CD4-positive, alpha-beta memory T cell (primary cell): ENCODE measurements at regions of chr3 and their contacts with region 1.

Region 1: DNA sequence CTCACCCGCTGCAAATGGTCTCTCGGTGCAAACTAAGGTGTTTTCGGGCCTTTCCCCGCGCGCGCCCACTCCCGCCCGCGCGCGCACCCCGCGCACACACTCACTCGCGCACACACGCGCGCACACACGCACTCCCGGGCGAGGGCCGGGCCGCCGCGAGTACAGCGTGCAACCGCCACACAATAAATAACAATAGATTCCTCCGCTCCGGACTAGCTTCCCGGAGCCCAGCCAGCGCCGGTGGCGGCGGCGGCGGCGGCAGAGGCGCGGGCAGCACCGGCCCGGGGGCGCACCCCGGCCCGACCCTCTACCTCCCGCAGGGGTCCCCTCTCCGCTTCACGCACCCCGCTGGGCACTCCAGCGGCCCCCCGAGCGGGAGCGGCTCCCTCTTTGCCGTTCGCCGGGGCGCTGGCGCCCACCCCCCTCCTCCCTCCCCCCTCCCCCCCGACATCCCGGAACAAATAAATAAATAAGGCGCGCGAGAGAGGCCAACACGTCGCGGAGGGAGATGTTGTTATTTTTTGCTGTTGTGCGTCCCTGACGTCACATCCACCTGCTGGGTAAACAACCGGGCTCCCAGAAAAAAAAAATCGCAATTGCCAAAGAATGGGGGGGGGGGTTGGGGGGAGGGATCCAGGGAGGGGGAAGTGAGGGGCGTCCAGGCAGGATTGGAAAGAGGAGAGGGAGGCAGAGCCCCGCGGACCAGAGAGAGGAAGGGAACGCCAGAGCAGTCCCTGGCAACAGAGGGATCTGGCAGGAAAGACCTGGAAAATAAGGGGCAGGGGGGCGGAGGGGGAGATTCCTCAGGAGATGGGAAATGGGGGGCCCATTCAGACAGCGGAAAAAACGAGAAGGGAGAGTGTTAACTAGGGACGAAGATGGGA is at the start of gene FOXP1:
- DNase-seq: peak; percentile 69 to 80 (median 75)
- H3K4me3 ChIP-seq: peak within 1 kb of the TSS; percentile 47 to 65
- H3K4me3 Mint-ChIP-seq: peak within 1 kb of the TSS; percentile 91 to 96 (median 94)
- H3K27ac ChIP-seq: peak within 1 kb of the TSS; percentile 64
- H3K27ac Mint-ChIP-seq: peak within 1 kb of the TSS; percentile 94 to 98 (median 97)
- H3K4me1 ChIP-seq: peaks cover 27% of the 10 kb centered on the region
- H3K4me1 Mint-ChIP-seq: peaks cover 14 to 53% (median 20%) of the 10 kb centered on the region in 4 donors
- H3K27me3 ChIP-seq: no peaks in the 10 kb centered on the region
- H3K27me3 Mint-ChIP-seq: no peaks in the 10 kb centered on the region
- total RNA-seq, gene FOXP1: 290 to 348 TPM

Region 2: DNA sequence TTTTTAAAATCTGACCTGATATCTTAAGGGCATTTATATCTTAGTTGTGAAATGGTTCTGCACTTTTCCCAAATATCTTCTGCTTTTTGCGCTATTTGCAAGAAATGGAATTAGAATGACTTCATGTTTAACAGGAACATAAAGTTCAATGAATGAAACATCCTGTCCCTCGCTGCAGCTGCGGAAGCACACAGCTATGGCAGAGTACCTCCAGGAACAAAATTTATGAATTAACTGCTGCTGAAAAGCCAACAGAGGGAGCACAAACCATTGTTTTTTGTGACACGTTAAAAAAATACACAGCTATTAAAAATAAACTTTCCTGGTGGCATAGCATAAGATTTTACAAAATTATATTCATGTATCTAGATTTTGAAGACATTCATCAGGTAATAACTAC is 867.0 kb before region 1 on chr3:
- CTCF ChIA-PET with region 1: no interaction called
- POLR2A ChIA-PET with region 1: no interaction called
- intact Hi-C with region 1: loop called (anchors 1 kb)
- DNase-seq: peak in 4 of 5 donors; percentile 3 to 7 (median 4)
- H3K4me3 ChIP-seq: no peak overlapping the region
- H3K4me3 Mint-ChIP-seq: no peak overlapping the region
- H3K27ac ChIP-seq: no peak overlapping the region
- H3K27ac Mint-ChIP-seq: no peak overlapping the region
- H3K4me1 ChIP-seq: no peaks in the 10 kb centered on the region
- H3K4me1 Mint-ChIP-seq: peaks cover 0 to 3% (median under 1%) of the 10 kb centered on the region in 4 donors
- H3K27me3 ChIP-seq: peaks cover 4% of the 10 kb centered on the region
- H3K27me3 Mint-ChIP-seq: peaks cover 3 to 14% of the 10 kb centered on the region in 2 donors

Region 3: GRCh38 chr3:71130471-71131374 is 453.1 kb before region 1 on chr3:
- CTCF ChIA-PET with region 1: interaction called, 3 read pairs
- POLR2A ChIA-PET with region 1: no interaction called
- intact Hi-C with region 1: loop called (anchors 10 kb)
- DNase-seq: peak; percentile 79 to 90 (median 85)
- H3K4me3 ChIP-seq: peak overlapping the region; percentile 59 to 90
- H3K4me3 Mint-ChIP-seq: peak overlapping the region; percentile 90 to 99 (median 94)
- H3K27ac ChIP-seq: peak overlapping the region; percentile 87
- H3K27ac Mint-ChIP-seq: peak overlapping the region; percentile 93 to 98 (median 97)
- H3K4me1 ChIP-seq: peaks cover 80% of the 10 kb centered on the region
- H3K4me1 Mint-ChIP-seq: peaks cover 39 to 90% (median 61%) of the 10 kb centered on the region in 4 donors
- H3K27me3 ChIP-seq: no peaks in the 10 kb centered on the region
- H3K27me3 Mint-ChIP-seq: no peaks in the 10 kb centered on the region

Region 4: GRCh38 chr3:71271596-71271995 is 312.2 kb before region 1 on chr3:
- CTCF ChIA-PET with region 1: no interaction called
- POLR2A ChIA-PET with region 1: no interaction called
- intact Hi-C with region 1: no loop called
- DNase-seq: no peak
- H3K4me3 ChIP-seq: no peak overlapping the region
- H3K4me3 Mint-ChIP-seq: no peak overlapping the region
- H3K27ac ChIP-seq: no peak overlapping the region
- H3K27ac Mint-ChIP-seq: peak overlapping the region in 1 of 7 donors; percentile 39
- H3K4me1 ChIP-seq: no peaks in the 10 kb centered on the region
- H3K4me1 Mint-ChIP-seq: peaks cover 32 to 68% (median 50%) of the 10 kb centered on the region in 4 donors
- H3K27me3 ChIP-seq: no peaks in the 10 kb centered on the region
- H3K27me3 Mint-ChIP-seq: no peaks in the 10 kb centered on the region

Region 5: GRCh38 chr3:71416876-71417275 is 166.9 kb before region 1 on chr3:
- CTCF ChIA-PET with region 1: no interaction called
- POLR2A ChIA-PET with region 1: no interaction called
- intact Hi-C with region 1: loop called (anchors 10 kb)
- DNase-seq: peak; percentile 33 to 55 (median 49)
- H3K4me3 ChIP-seq: no peak overlapping the region
- H3K4me3 Mint-ChIP-seq: peak overlapping the region in 7 of 8 donors; percentile 30 to 83 (median 63)
- H3K27ac ChIP-seq: no peak overlapping the region
- H3K27ac Mint-ChIP-seq: peak overlapping the region; percentile 75 to 95 (median 85)
- H3K4me1 ChIP-seq: peaks cover 77% of the 10 kb centered on the region
- H3K4me1 Mint-ChIP-seq: peaks cover 55 to 93% (median 74%) of the 10 kb centered on the region in 4 donors
- H3K27me3 ChIP-seq: no peaks in the 10 kb centered on the region
- H3K27me3 Mint-ChIP-seq: no peaks in the 10 kb centered on the region

Region 6: DNA sequence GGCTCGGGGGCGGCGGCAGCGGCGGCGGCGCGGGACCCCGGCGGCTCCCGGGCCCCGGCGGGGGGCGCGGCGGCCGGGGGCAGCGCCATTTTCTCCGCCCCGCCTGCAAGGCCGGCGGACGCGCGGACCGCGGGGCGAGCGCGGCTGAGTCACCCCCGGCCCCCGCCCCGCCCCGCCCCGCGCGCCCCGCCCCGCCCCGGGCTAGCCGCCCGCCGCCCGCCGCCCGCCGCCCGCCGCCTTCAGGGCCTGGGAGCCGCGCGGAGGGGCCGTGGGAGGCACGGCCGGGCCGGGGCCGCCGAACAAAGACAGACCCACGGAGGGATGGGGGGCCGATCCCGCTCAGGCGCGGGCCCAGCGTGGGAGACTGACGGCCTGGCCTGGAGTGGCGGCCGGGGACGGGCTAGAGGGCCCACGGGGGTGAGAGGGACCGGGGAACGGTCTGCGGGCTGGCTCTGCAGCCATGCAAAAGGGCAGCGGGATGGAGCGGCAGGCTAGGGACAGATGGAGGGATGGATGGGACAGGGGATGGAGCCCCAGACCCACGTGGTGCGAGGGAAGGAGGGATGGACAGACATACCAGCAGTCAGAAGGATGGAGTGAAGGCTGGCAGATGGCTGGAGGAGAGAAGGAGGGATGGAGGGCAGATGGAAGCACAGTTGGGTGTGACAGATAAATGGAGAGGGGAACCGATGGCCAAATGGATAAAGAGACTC is 141.6 kb after region 1 on chr3 and contains the start of gene EIF4E3:
- CTCF ChIA-PET with region 1: no interaction called
- POLR2A ChIA-PET with region 1: no interaction called
- intact Hi-C with region 1: loop called (anchors 5 kb)
- DNase-seq: peak in 4 of 5 donors; percentile 36 to 47 (median 45)
- H3K4me3 ChIP-seq: peak within 1 kb of the TSS; percentile 85 to 95
- H3K4me3 Mint-ChIP-seq: peak within 1 kb of the TSS; percentile 94 to 98 (median 97)
- H3K27ac ChIP-seq: peak within 1 kb of the TSS; percentile 77
- H3K27ac Mint-ChIP-seq: peak within 1 kb of the TSS; percentile 92 to 99 (median 97)
- H3K4me1 ChIP-seq: peaks cover 81% of the 10 kb centered on the region
- H3K4me1 Mint-ChIP-seq: peaks cover 56 to 79% (median 69%) of the 10 kb centered on the region in 4 donors
- H3K27me3 ChIP-seq: no peaks in the 10 kb centered on the region
- H3K27me3 Mint-ChIP-seq: no peaks in the 10 kb centered on the region
- total RNA-seq, gene EIF4E3: 51.5 to 58.7 TPM